ENCODE measurements at regions of chr2 and their contacts with region 1.

Region 1: GRCh38 chr2:118061135-118061955 is 26.9 kb upstream of the INSIG2 start:
- DNase-seq: peak in 1 of 3 donors; percentile 10
- ATAC-seq: peak; percentile 42
- H3K4me3 ChIP-seq: no peak overlapping the region
- H3K4me1 ChIP-seq: no peaks in the 10 kb centered on the region
- CTCF ChIP-seq: no peak

Region 2: DNA sequence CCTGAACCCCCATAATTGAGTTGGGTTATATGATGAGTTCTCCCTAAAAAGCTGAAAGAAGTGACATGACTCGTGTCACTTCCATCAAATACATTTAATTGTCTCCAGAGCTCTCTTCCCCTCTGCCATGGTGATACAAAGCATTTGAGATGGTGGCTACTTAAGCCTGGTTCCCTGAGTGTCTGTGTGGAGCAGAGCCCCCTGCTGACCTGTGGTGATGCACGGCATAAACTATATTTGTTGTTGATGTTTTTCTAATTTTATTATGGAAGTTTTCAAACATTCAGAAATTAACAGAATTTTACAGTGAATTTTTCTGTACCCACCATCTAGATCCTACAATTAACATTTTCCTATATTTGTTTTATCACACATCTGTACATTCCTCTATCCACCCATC is 307.5 kb before region 1 on chr2:
- intact Hi-C with region 1: no loop called
- DNase-seq: no peak
- ATAC-seq: no peak
- H3K4me3 ChIP-seq: no peak overlapping the region
- H3K4me1 ChIP-seq: no peaks in the 10 kb centered on the region
- CTCF ChIP-seq: no peak

Region 3: DNA sequence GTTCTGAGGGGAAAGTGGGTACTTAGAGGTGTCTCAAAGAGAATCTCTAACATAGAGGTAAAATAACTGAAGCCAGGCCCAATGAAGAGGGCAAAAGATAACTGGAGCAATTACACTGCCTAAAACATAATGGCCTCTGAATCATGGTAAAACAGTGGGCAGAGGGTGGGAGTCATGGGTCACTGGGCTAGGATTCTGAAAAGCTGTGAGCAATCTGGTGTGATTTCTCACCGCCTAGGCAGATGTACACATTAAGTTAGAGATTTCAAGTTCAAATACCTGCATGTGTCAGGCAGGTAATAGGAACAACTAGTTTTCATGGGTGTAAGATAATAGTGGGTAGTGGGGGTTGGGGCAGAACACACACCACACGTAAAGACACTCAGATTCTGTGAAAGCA is 72.6 kb after region 1 on chr2:
- intact Hi-C with region 1: no loop called
- DNase-seq: no peak
- ATAC-seq: no peak
- H3K4me3 ChIP-seq: no peak overlapping the region
- H3K4me1 ChIP-seq: no peaks in the 10 kb centered on the region
- CTCF ChIP-seq: no peak

Region 4: GRCh38 chr2:118148809-118149208 is 87.5 kb after region 1 on chr2:
- intact Hi-C with region 1: no loop called
- DNase-seq: no peak
- ATAC-seq: no peak
- H3K4me3 ChIP-seq: no peak overlapping the region
- H3K4me1 ChIP-seq: no peaks in the 10 kb centered on the region
- CTCF ChIP-seq: no peak

Region 5: DNA sequence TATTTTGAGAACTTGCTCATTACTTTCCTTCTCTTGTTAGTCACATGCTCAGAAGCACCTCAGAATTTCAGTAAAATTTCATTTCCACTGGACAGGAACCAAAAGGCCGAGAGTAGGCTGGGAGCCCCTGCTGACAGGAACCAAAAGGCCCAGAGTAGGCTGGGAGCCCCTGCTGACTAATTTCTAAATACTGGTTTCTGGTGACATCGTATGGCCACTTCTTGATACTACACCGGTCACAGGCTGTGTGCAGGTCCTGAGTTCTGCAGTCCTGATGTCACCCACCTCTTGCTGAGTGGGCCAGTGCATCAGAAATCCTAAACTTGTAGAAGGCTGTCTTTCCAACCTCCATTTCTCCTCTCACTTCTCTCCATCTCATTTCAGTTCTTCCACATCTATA is 803.8 kb after region 1 on chr2:
- intact Hi-C with region 1: loop called in 1 of 2 experiments (anchors 10 kb)
- DNase-seq: peak in 1 of 3 donors; percentile 39
- ATAC-seq: peak; percentile 57
- H3K4me3 ChIP-seq: no peak overlapping the region
- H3K4me1 ChIP-seq: no peaks in the 10 kb centered on the region
- CTCF ChIP-seq: no peak